ENCODE measurements at regions of chr10 and their contacts with region 1.

Region 1: GRCh38 chr10:70571636-70572439 is 30.7 kb downstream of the PRF1 start:
- DNase-seq: no peak
- H3K4me3 ChIP-seq: no peak overlapping the region
- H3K4me3 Mint-ChIP-seq: no peak overlapping the region
- H3K27ac ChIP-seq: no peak overlapping the region
- H3K27ac Mint-ChIP-seq: peak overlapping the region in 2 of 7 donors; percentile 23 to 73
- H3K4me1 ChIP-seq: peaks cover 13% of the 10 kb centered on the region
- H3K4me1 Mint-ChIP-seq: peaks cover 10 to 24% (median 15%) of the 10 kb centered on the region in 4 donors
- H3K27me3 ChIP-seq: no peaks in the 10 kb centered on the region
- H3K27me3 Mint-ChIP-seq: no peaks in the 10 kb centered on the region

Region 2: DNA sequence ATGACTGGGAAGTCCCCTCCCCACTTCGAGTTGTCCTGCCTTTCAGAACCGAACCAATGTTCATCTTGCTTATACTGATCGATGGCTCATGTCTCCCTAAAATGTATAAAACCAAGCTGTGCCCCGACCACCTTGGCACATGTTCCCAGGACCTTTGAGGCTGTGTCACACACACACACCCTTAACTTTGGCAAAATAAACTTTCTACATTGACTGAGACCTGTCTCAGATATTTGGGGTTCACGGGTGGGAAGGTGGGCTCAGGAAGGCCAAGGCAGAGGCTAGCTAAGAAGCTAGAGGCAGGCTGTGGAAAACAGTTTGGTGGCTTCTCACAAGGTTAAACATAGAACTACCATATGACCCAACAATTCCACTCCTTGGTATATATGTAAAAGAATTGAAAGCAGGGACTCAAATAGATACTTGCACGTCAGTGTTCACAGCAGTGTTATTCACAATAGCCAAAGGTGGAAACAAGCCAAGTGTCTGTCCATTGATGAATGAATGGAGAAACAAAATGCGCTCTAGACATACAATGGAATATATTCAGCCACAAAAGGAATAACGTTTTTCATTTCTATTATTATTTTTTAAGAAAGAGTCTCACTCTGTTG is 15.3 kb after region 1 on chr10:
- CTCF ChIA-PET with region 1: no interaction called
- POLR2A ChIA-PET with region 1: no interaction called
- intact Hi-C with region 1: loop called (anchors 1 kb)
- DNase-seq: no peak
- H3K4me3 ChIP-seq: no peak overlapping the region
- H3K4me3 Mint-ChIP-seq: no peak overlapping the region
- H3K27ac ChIP-seq: no peak overlapping the region
- H3K27ac Mint-ChIP-seq: peak overlapping the region in 1 of 7 donors; percentile 21
- H3K4me1 ChIP-seq: no peaks in the 10 kb centered on the region
- H3K4me1 Mint-ChIP-seq: peaks cover 0 to 3% (median 0%) of the 10 kb centered on the region in 4 donors
- H3K27me3 ChIP-seq: no peaks in the 10 kb centered on the region
- H3K27me3 Mint-ChIP-seq: peaks cover 0 to 5% of the 10 kb centered on the region in 2 donors